Heart left ventricle (tissue), 16 donors: ENCODE measurements at regions of chr4 and their contacts with region 1.

Region 1: DNA sequence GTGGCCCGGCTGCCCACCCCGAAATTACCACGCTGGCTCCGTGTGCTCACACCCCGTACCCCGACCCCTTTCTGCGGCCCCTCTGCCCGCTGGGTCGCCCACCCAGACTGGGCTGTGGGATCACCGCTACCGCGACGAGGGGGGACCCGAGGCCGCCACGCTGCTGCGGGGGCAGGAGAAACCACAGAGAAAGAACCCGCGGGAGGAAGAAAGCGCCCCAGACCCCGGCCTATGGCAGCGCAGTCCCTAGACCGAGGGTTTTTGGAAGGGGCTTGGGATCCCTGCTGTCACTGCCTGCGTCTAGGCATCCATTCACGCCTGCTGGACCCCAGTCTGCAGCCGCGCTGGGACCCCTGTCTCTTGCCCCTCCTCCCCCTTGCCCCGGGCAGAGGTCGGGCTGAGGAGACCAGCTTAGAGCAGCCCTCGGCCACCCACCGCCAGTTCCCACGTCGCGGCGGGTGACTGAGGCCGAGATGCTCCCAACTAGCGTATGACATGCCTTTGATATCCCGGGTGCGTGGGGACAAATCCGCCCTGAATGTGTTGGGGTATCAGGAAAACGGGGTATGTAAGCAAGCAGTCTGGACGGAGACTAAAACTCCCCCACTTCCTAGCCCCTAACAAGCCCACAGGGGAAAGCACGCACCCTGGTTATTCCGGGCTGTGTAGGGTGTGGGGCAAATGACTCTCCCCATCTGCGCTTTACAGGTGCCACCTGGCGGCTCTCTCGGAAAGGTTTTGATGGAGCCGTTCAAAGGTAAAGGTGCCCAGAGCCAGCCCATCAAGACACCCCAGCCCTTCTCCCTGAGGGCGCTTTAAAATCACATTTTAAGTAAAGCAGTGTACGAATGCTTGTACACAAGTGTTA is 862 bp upstream of the INPP4B start:
- DNase-seq: peak; percentile 41 to 68 (median 48)
- ATAC-seq: peak; percentile 75 to 84 (median 78)
- H3K4me3 ChIP-seq: peak overlapping the region; percentile 57 to 85 (median 72)
- H3K27ac ChIP-seq: peak overlapping the region; percentile 73 to 96 (median 86)
- H3K4me1 ChIP-seq: peaks cover 0 to 27% (median 2%) of the 10 kb centered on the region in 12 donors
- H3K27me3 ChIP-seq: peaks cover 0 to 46% (median 2%) of the 10 kb centered on the region in 9 donors
- CTCF ChIP-seq: peak in 8 of 12 donors; percentile 29 to 55 (median 40)
- POLR2A ChIP-seq: no peak

Region 2: DNA sequence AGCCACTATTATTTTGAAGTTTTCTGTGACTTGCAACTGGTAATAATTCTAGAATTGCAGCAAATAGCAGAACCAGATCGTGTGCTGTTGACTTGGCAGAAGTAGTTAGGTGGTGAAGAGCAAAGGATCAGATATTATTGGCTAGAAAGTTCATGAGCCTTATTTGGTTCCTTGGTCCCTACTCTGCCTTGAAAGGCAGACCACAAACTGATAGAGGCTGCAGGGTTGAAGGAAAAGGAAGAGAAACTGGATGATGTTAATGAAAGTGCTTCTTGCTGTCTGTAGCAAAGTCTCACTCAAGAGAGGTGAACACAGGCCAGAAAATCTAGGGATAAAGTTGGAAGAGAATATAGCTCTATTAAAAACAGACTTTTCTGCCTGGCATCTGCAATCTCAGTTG is 1672.5 kb before region 1 on chr4:
- intact Hi-C with region 1: loop called in 1 of 10 experiments (anchors 10 kb)
- DNase-seq: no peak
- ATAC-seq: no peak
- H3K4me3 ChIP-seq: no peak overlapping the region
- H3K27ac ChIP-seq: no peak overlapping the region
- H3K4me1 ChIP-seq: no peaks in the 10 kb centered on the region
- H3K27me3 ChIP-seq: no peaks in the 10 kb centered on the region
- CTCF ChIP-seq: no peak
- POLR2A ChIP-seq: no peak

Region 3: GRCh38 chr4:141307241-141307689 is 1539.7 kb before region 1 on chr4:
- intact Hi-C with region 1: loop called in 1 of 10 experiments (anchors 10 kb)
- DNase-seq: peak; percentile 30 to 66 (median 37)
- ATAC-seq: peak; percentile 87 to 93 (median 92)
- H3K4me3 ChIP-seq: no peak overlapping the region
- H3K27ac ChIP-seq: peak overlapping the region in 4 of 12 donors; percentile 1 to 61 (median 31)
- H3K4me1 ChIP-seq: peaks cover 0 to 6% (median 0%) of the 10 kb centered on the region in 12 donors
- H3K27me3 ChIP-seq: no peaks in the 10 kb centered on the region
- CTCF ChIP-seq: peak; percentile 51 to 78 (median 69)
- POLR2A ChIP-seq: no peak

Region 4: DNA sequence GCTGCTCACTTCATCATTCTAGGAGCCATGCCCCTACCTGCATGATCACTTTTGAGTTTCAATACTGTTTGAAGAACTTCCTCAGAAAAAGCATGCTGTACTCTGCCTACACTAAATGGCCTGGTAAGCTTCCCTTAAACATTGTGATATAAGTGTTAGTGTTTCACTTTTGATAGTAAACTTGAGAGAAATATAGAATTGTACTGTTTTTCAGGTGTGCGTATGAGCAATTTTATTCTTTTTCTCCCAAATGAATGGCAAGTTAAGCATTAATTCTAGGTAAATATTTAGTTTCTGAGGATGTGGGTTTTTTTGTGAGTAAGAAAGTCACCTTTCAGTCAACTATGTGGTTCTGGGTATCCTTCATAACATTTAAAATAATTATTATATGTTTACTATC is 726.0 kb before region 1 on chr4:
- intact Hi-C with region 1: loop called in 8 of 10 experiments (anchors 2 to 10 kb)
- DNase-seq: no peak
- ATAC-seq: no peak
- H3K4me3 ChIP-seq: no peak overlapping the region
- H3K27ac ChIP-seq: no peak overlapping the region
- H3K4me1 ChIP-seq: peaks cover 0 to 4% (median 0%) of the 10 kb centered on the region in 12 donors
- H3K27me3 ChIP-seq: no peaks in the 10 kb centered on the region
- CTCF ChIP-seq: no peak
- POLR2A ChIP-seq: no peak

Region 5: DNA sequence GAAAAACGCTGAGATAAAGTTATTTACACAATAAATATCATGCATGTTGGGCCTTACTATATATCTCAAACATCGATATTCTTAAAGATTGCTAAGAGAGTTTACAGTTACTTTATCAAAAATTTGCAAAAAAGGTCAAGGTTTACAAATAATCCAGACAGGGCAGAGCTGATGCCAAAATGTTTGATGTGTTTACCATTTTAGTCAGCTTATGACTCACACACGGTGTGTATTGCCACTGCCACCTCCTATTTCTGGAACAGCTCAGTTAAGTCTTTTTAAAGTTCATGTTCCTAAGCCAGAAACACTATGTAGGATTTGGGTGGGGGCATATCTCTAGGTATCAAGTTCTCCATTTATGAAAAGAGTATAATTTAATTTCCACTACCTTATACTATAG is 581.4 kb before region 1 on chr4:
- intact Hi-C with region 1: loop called in 1 of 10 experiments (anchors 10 kb)
- DNase-seq: peak in 4 of 5 donors; percentile 24 to 32 (median 28)
- ATAC-seq: peak; percentile 84 to 94 (median 92)
- H3K4me3 ChIP-seq: peak overlapping the region in 2 of 12 donors; percentile 4 to 6
- H3K27ac ChIP-seq: peak overlapping the region; percentile 49 to 89 (median 76)
- H3K4me1 ChIP-seq: peaks cover 0 to 37% (median 13%) of the 10 kb centered on the region in 12 donors
- H3K27me3 ChIP-seq: no peaks in the 10 kb centered on the region
- CTCF ChIP-seq: no peak
- POLR2A ChIP-seq: no peak

Region 6: DNA sequence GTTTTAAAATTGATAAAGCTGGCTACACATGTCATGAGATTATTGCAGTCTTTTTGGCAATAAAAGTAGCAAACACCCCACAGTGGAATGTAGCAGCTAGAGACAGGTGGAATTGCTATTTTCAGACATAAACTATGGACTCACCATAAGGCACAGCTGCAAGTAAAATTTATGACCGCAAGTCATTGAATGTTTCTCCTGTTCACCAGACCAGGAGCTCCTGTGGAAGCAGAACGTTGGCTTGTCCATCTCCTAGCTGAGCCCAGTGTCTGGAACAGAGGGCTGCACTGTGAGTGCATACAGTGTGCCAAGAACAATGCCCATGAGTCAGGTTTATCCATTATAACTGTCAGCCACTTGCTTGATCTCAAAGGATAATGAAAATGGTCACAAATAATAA is 539.1 kb before region 1 on chr4:
- intact Hi-C with region 1: loop called in 1 of 10 experiments (anchors 10 kb)
- DNase-seq: no peak
- ATAC-seq: peak in 1 of 4 donors; percentile 50
- H3K4me3 ChIP-seq: no peak overlapping the region
- H3K27ac ChIP-seq: no peak overlapping the region
- H3K4me1 ChIP-seq: peaks cover 0 to 26% (median 2%) of the 10 kb centered on the region in 12 donors
- H3K27me3 ChIP-seq: no peaks in the 10 kb centered on the region
- CTCF ChIP-seq: no peak
- POLR2A ChIP-seq: no peak

Region 7: GRCh38 chr4:142353149-142353738 is 493.7 kb before region 1 on chr4:
- intact Hi-C with region 1: loop called in 9 of 10 experiments (anchors 5 to 10 kb)
- DNase-seq: peak in 1 of 5 donors; percentile 15
- ATAC-seq: peak in 3 of 4 donors; percentile 16 to 64 (median 46)
- H3K4me3 ChIP-seq: no peak overlapping the region
- H3K27ac ChIP-seq: peak overlapping the region in 8 of 12 donors; percentile 8 to 62 (median 47)
- H3K4me1 ChIP-seq: peaks cover under 1 to 76% (median 58%) of the 10 kb centered on the region in 12 donors
- H3K27me3 ChIP-seq: no peaks in the 10 kb centered on the region
- CTCF ChIP-seq: peak; percentile 74 to 97 (median 92)
- POLR2A ChIP-seq: no peak

Region 8: DNA sequence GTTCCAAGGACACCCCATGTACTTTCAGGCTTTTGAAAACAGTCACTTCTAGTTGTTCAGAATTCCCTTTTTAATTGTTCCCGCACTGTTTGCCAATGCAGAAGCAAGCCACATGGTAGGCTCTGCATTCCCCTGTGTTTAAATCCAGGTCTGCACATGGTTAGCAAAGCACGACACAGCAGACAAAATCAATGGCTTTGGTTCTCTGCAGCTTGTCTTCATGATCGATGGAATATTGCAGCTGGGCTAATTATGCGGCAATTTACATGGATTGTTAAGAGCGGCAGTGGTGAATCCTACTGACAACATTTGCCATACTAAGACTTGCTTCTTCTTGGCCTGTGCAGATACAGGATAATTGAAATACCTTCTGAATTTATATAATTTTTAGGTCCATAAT is 19.7 kb after region 1 on chr4:
- intact Hi-C with region 1: no loop called
- DNase-seq: no peak
- ATAC-seq: no peak
- H3K4me3 ChIP-seq: no peak overlapping the region
- H3K27ac ChIP-seq: no peak overlapping the region
- H3K4me1 ChIP-seq: peaks cover 0 to 9% (median 0%) of the 10 kb centered on the region in 12 donors
- H3K27me3 ChIP-seq: no peaks in the 10 kb centered on the region
- CTCF ChIP-seq: no peak
- POLR2A ChIP-seq: no peak

Region 9: GRCh38 chr4:142917678-142918077 is 70.7 kb after region 1 on chr4:
- intact Hi-C with region 1: no loop called
- DNase-seq: no peak
- ATAC-seq: no peak
- H3K4me3 ChIP-seq: no peak overlapping the region
- H3K27ac ChIP-seq: no peak overlapping the region
- H3K4me1 ChIP-seq: no peaks in the 10 kb centered on the region
- H3K27me3 ChIP-seq: no peaks in the 10 kb centered on the region
- CTCF ChIP-seq: no peak
- POLR2A ChIP-seq: no peak

Region 10: GRCh38 chr4:143020433-143020832 is 173.5 kb after region 1 on chr4:
- intact Hi-C with region 1: no loop called
- DNase-seq: no peak
- ATAC-seq: no peak
- H3K4me3 ChIP-seq: no peak overlapping the region
- H3K27ac ChIP-seq: no peak overlapping the region
- H3K4me1 ChIP-seq: peaks cover 0 to 26% (median 0%) of the 10 kb centered on the region in 12 donors
- H3K27me3 ChIP-seq: no peaks in the 10 kb centered on the region
- CTCF ChIP-seq: no peak
- POLR2A ChIP-seq: no peak

Region 11: GRCh38 chr4:143118663-143119062 is 271.7 kb after region 1 on chr4:
- intact Hi-C with region 1: no loop called
- DNase-seq: no peak
- ATAC-seq: no peak
- H3K4me3 ChIP-seq: no peak overlapping the region
- H3K27ac ChIP-seq: no peak overlapping the region
- H3K4me1 ChIP-seq: no peaks in the 10 kb centered on the region
- H3K27me3 ChIP-seq: no peaks in the 10 kb centered on the region
- CTCF ChIP-seq: no peak
- POLR2A ChIP-seq: no peak